ENCODE measurements at regions of chr11 and their contacts with region 1.

Region 1: GRCh38 chr11:96779028-96779427 is 389.2 kb downstream of the JRKL start:
- DNase-seq: no peak
- ATAC-seq: no peak
- H3K4me3 ChIP-seq: no peak overlapping the region
- H3K4me3 Mint-ChIP-seq: no peak overlapping the region
- H3K27ac ChIP-seq: no peak overlapping the region
- H3K27ac Mint-ChIP-seq: no peak overlapping the region
- H3K4me1 ChIP-seq: no peaks in the 10 kb centered on the region
- H3K4me1 Mint-ChIP-seq: no peaks in the 10 kb centered on the region
- H3K27me3 ChIP-seq: no peaks in the 10 kb centered on the region
- H3K27me3 Mint-ChIP-seq: no peaks in the 10 kb centered on the region
- CTCF ChIP-seq: no peak

Region 2: GRCh38 chr11:96763244-96763643 is 15.8 kb before region 1 on chr11:
- intact Hi-C with region 1: loop called (anchors 1 kb)
- DNase-seq: no peak
- ATAC-seq: no peak
- H3K4me3 ChIP-seq: no peak overlapping the region
- H3K4me3 Mint-ChIP-seq: no peak overlapping the region
- H3K27ac ChIP-seq: no peak overlapping the region
- H3K27ac Mint-ChIP-seq: no peak overlapping the region
- H3K4me1 ChIP-seq: no peaks in the 10 kb centered on the region
- H3K4me1 Mint-ChIP-seq: no peaks in the 10 kb centered on the region
- H3K27me3 ChIP-seq: no peaks in the 10 kb centered on the region
- H3K27me3 Mint-ChIP-seq: no peaks in the 10 kb centered on the region
- CTCF ChIP-seq: no peak

Region 3: GRCh38 chr11:97069160-97069559 is 290.1 kb after region 1 on chr11:
- intact Hi-C with region 1: no loop called
- DNase-seq: no peak
- ATAC-seq: no peak
- H3K4me3 ChIP-seq: no peak overlapping the region
- H3K4me3 Mint-ChIP-seq: no peak overlapping the region
- H3K27ac ChIP-seq: no peak overlapping the region
- H3K27ac Mint-ChIP-seq: no peak overlapping the region
- H3K4me1 ChIP-seq: no peaks in the 10 kb centered on the region
- H3K4me1 Mint-ChIP-seq: no peaks in the 10 kb centered on the region
- H3K27me3 ChIP-seq: no peaks in the 10 kb centered on the region
- H3K27me3 Mint-ChIP-seq: no peaks in the 10 kb centered on the region
- CTCF ChIP-seq: no peak